ENCODE measurements at regions of chr6 and their contacts with region 1.

Region 1: DNA sequence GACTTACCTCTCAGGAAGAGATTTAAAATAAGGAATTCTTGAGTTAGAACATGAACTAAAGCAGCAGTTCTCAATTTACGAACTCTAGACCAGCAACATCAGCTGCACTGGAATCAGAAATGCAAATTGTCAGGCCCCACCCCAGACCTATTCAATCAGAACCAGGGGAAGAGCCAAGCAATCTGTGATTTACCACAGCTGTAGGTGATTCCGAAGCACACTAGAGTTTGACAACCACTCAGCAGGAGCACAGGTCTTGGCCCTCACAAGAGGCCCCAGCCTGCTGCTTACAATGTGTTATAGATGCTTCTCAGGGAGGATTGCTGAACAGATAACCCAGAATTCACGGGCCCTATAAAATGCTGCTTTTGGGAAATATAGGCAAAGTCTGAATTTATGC is 279.2 kb downstream of the PTPRK start:
- DNase-seq: no peak
- ATAC-seq: no peak
- H3K4me3 ChIP-seq: no peak overlapping the region
- H3K27ac ChIP-seq: no peak overlapping the region
- H3K4me1 ChIP-seq: no peaks in the 10 kb centered on the region
- H3K27me3 ChIP-seq: no peaks in the 10 kb centered on the region
- CTCF ChIP-seq: no peak

Region 2: GRCh38 chr6:128179876-128180438 is 61.3 kb before region 1 on chr6:
- CTCF ChIA-PET with region 1: no interaction called
- POLR2A ChIA-PET with region 1: interaction called, 11 read pairs
- intact Hi-C with region 1: no loop called
- DNase-seq: no peak
- ATAC-seq: no peak
- H3K4me3 ChIP-seq: no peak overlapping the region
- H3K27ac ChIP-seq: no peak overlapping the region
- H3K4me1 ChIP-seq: no peaks in the 10 kb centered on the region
- H3K27me3 ChIP-seq: no peaks in the 10 kb centered on the region
- CTCF ChIP-seq: no peak